CD14-positive monocyte (primary cell): ENCODE measurements at regions of chr17 and their contacts with region 1.

Region 1: GRCh38 chr17:4229627-4230541 is 33.9 kb downstream of the ANKFY1 start:
- DNase-seq: no peak
- H3K4me3 ChIP-seq: no peak overlapping the region
- H3K4me3 Mint-ChIP-seq: no peak overlapping the region
- H3K27ac ChIP-seq: no peak overlapping the region
- H3K27ac Mint-ChIP-seq: no peak overlapping the region
- H3K4me1 ChIP-seq: no peaks in the 10 kb centered on the region
- H3K4me1 Mint-ChIP-seq: peaks cover 2% of the 10 kb centered on the region
- H3K27me3 ChIP-seq: no peaks in the 10 kb centered on the region
- H3K27me3 Mint-ChIP-seq: no peaks in the 10 kb centered on the region
- CTCF ChIP-seq: no peak

Region 2: DNA sequence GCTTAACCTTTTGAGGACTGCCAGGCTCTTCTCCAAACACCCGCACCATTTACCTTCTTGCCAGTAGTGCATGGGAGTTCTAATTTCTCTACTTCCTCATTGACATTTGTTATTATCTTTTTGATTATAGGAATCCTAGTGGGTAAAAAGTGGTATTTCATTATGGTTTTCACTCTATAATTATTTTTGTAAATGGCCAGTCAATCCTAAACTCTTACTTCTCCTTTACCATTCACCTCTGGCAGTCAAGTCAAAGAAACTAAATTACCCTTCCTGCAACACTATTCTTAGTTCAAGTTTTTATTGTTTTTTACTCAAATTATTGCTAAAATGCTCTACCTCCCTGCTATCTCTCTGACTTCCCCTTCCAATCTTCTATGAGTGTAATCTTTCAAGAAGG is 63.7 kb after region 1 on chr17:
- intact Hi-C with region 1: loop called in 1 of 2 experiments (anchors 10 kb)
- DNase-seq: no peak
- H3K4me3 ChIP-seq: no peak overlapping the region
- H3K4me3 Mint-ChIP-seq: no peak overlapping the region
- H3K27ac ChIP-seq: no peak overlapping the region
- H3K27ac Mint-ChIP-seq: peak overlapping the region in 3 of 7 donors; percentile 11 to 75 (median 19)
- H3K4me1 ChIP-seq: no peaks in the 10 kb centered on the region
- H3K4me1 Mint-ChIP-seq: peaks cover 2% of the 10 kb centered on the region
- H3K27me3 ChIP-seq: no peaks in the 10 kb centered on the region
- H3K27me3 Mint-ChIP-seq: no peaks in the 10 kb centered on the region
- CTCF ChIP-seq: no peak